ENCODE measurements at regions of chr14 and their contacts with region 1.

Region 1: GRCh38 chr14:44961604-44962333 is at the starts of genes KLHL28 and TOGARAM1:
- DNase-seq: peak; percentile 96 to 100 (median 99)
- H3K4me3 ChIP-seq: peak within 1 kb of the TSS; percentile 56 to 98 (median 87)
- H3K27ac ChIP-seq: peak within 1 kb of the TSS; percentile 42 to 95 (median 87)
- H3K27me3 ChIP-seq: no peaks in the 10 kb centered on the region
- CTCF ChIP-seq: peak in 11 of 56 donors; percentile 5 to 40 (median 15)
- total RNA-seq, gene KLHL28: 15.5 to 37.2 (median 24.2) TPM
- total RNA-seq, gene TOGARAM1: 39.9 to 74.9 (median 59.1) TPM

Region 2: GRCh38 chr14:43651185-43652028 is 1310.4 kb before region 1 on chr14:
- intact Hi-C with region 1: no loop called
- DNase-seq: no peak
- H3K4me3 ChIP-seq: no peak overlapping the region
- H3K27ac ChIP-seq: no peak overlapping the region
- H3K27me3 ChIP-seq: no peaks in the 10 kb centered on the region
- CTCF ChIP-seq: no peak

Region 3: DNA sequence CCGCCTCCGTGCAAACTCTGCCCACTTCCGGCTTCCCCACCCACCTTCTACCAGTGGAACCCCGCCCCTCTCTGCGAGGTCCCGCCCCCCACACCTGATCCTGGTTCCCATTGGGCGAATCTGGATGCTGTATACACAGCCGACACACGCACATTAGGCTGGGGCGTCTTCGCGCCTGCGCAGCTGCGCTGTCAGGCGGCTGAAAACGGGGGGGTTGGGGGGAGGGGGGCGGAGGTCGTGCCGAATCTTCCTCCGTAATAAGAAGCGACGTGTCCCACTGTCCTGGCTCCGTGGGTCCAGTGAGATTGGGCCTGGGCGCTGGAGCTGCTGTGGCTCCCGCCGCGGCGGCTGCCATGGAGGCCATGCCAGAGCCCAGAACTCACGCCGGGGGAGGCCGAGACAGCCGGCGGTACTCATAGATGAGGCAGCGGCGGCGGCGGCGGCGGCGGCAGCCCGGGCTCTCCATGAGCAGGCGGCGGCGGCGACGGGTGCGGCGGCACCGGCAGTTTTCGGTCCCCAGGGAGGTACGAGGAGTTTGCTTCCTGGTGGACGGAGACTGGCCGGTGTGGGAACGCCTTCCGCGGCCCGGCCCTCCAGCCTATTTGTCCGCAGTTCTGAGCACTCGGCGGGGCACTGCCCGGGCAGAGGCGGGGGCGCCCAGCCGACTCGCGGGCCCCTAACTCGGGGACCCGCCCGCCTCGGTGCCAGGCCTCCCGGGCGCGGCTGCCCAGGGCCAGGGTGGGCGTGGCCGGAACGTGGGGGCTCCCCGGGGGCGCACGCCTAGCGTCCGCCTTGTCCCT is 64.5 kb before region 1 on chr14:
- intact Hi-C with region 1: loop called (anchors 1 to 5 kb)
- DNase-seq: peak; percentile 92 to 100 (median 99)
- H3K4me3 ChIP-seq: peak overlapping the region; percentile 60 to 98 (median 89)
- H3K27ac ChIP-seq: peak overlapping the region; percentile 88 to 99 (median 96)
- H3K27me3 ChIP-seq: no peaks in the 10 kb centered on the region
- CTCF ChIP-seq: peak in 9 of 56 donors; percentile 1 to 35 (median 22)